Naive thymus-derived CD4-positive, alpha-beta T cell (primary cell): ENCODE measurements at regions of chr17 and their contacts with region 1.

Region 1: GRCh38 chr17:4004517-4005295 is 40.5 kb upstream of the ATP2A3 start:
- DNase-seq: peak; percentile 32 to 80 (median 64)
- ATAC-seq: peak; percentile 68
- H3K4me3 ChIP-seq: no peak overlapping the region
- H3K4me3 Mint-ChIP-seq: no peak overlapping the region
- H3K27ac ChIP-seq: no peak overlapping the region
- H3K27ac Mint-ChIP-seq: peak overlapping the region in 2 of 9 donors; percentile 65
- H3K4me1 ChIP-seq: peaks cover 0 to 7% of the 10 kb centered on the region in 2 donors
- H3K4me1 Mint-ChIP-seq: peaks cover 4 to 17% (median 7%) of the 10 kb centered on the region in 7 donors
- H3K27me3 ChIP-seq: no peaks in the 10 kb centered on the region
- H3K27me3 Mint-ChIP-seq: no peaks in the 10 kb centered on the region

Region 2: GRCh38 chr17:3935140-3935542 is 69.6 kb before region 1 on chr17:
- CTCF ChIA-PET with region 1: interaction called, 4 read pairs
- POLR2A ChIA-PET with region 1: interaction called, 3 read pairs
- intact Hi-C with region 1: loop called (anchors 1 to 2 kb)
- DNase-seq: peak in 5 of 9 donors; percentile 34 to 48 (median 38)
- ATAC-seq: peak; percentile 85
- H3K4me3 ChIP-seq: no peak overlapping the region
- H3K4me3 Mint-ChIP-seq: no peak overlapping the region
- H3K27ac ChIP-seq: no peak overlapping the region
- H3K27ac Mint-ChIP-seq: no peak overlapping the region
- H3K4me1 ChIP-seq: no peaks in the 10 kb centered on the region
- H3K4me1 Mint-ChIP-seq: peaks cover 0 to 5% (median 0%) of the 10 kb centered on the region in 7 donors
- H3K27me3 ChIP-seq: no peaks in the 10 kb centered on the region
- H3K27me3 Mint-ChIP-seq: no peaks in the 10 kb centered on the region

Region 3: GRCh38 chr17:4232168-4232813 is 227.6 kb after region 1 on chr17:
- CTCF ChIA-PET with region 1: no interaction called
- POLR2A ChIA-PET with region 1: no interaction called
- intact Hi-C with region 1: no loop called
- DNase-seq: peak in 2 of 9 donors; percentile 7
- ATAC-seq: no peak
- H3K4me3 ChIP-seq: no peak overlapping the region
- H3K4me3 Mint-ChIP-seq: no peak overlapping the region
- H3K27ac ChIP-seq: no peak overlapping the region
- H3K27ac Mint-ChIP-seq: peak overlapping the region; percentile 4 to 84 (median 63)
- H3K4me1 ChIP-seq: peaks cover 6 to 9% of the 10 kb centered on the region in 2 donors
- H3K4me1 Mint-ChIP-seq: peaks cover 10 to 25% (median 18%) of the 10 kb centered on the region in 7 donors
- H3K27me3 ChIP-seq: no peaks in the 10 kb centered on the region
- H3K27me3 Mint-ChIP-seq: no peaks in the 10 kb centered on the region

Region 4: DNA sequence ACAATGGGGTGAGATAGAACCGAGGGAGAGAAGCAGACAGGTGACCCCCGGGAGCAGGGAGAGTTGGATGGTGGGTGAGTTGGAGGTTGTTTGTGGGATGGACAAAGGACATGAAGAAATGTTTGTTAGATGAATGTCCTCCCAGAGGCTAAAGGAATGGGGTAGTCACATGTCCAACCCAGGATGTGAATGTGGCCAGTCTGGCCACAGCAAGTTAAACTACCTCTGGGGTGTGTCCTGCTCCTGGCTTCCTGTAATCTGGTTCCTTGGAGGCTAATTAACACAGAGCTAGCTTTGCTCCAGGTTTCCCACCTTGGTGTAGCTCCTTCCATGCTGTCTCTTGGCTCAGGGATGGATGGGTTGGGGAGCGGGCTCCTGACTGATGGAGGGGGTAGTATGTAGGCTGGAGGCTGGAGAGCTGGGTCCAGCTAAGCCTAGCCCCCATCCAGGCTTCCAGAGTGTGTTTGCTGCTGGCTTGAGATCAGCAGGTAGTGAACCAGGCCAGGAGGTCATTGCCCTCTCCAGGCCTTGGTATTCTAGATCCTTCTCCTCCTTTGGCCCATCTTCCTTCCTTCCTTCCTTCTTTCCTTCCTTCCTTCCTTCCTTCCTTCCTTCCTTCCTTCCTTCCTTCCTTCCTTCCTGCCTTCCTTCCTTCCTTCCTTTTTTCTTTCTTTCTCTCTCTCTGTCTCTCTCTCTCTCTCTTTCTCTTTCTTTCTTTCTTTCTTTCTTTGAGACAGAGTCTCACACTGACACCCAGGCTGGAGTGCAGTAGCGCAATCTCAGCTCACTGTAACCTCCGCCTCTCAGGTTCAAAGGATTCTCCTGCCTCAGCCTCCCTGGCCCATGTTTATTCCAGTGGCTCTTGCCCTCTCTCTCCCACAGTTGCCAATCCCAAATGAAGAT is 389.8 kb after region 1 on chr17:
- CTCF ChIA-PET with region 1: no interaction called
- POLR2A ChIA-PET with region 1: no interaction called
- intact Hi-C with region 1: no loop called
- DNase-seq: no peak
- ATAC-seq: no peak
- H3K4me3 ChIP-seq: no peak overlapping the region
- H3K4me3 Mint-ChIP-seq: no peak overlapping the region
- H3K27ac ChIP-seq: no peak overlapping the region
- H3K27ac Mint-ChIP-seq: peak overlapping the region in 2 of 9 donors; percentile 13 to 30
- H3K4me1 ChIP-seq: no peaks in the 10 kb centered on the region
- H3K4me1 Mint-ChIP-seq: peaks cover 0 to 26% (median 5%) of the 10 kb centered on the region in 7 donors
- H3K27me3 ChIP-seq: no peaks in the 10 kb centered on the region
- H3K27me3 Mint-ChIP-seq: no peaks in the 10 kb centered on the region